Endothelial cell of umbilical vein (primary cell): ENCODE measurements at regions of chr17 and their contacts with region 1.

Region 1: DNA sequence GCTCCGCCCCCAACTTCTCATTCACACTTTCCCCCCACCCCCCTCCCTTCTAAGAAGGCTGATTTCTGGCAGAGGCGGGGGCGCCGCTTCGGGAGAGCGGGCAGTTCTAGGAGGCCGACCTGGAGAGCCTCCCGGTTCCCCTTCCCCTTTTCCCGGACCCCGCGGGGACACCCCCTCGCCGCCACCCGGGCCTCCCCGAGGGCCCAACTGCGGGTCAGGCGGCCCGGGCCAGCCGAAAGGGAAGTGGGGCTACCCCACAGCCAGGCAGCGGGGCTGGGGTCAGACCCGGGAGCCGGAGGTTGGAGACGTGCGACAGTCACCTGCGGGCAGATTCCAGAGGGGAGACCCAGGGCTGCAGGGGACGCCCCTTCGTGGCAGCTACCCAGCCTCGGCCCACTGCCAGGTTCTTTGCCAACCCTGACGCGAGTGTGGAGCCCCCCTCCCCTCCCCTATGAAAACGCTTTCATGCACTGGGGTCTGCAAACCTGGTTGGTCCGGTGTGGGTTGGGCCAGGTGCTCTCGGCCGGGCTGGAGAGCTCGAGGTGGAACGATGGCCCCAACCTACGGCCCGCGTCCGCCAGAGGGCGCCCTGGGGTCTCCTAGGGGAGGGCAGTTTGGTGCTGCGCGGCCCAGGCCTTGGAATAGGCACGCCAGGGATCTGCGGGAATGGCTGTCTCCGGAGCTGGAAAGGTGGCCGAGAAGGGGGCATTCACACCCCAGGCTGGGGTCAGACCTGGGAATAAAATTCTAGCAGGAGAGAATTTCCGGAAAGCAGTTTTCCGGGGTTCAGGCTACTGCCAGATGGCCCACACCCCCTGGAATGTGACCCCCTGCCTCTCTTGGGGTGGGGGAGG is 721 bp upstream of the SOCS3 start:
- DNase-seq: peak; percentile 84
- H3K4me3 ChIP-seq: peak overlapping the region; percentile 28 to 46 (median 39)
- H3K27ac ChIP-seq: peak overlapping the region; percentile 54
- H3K4me1 ChIP-seq: peaks cover 36% of the 10 kb centered on the region
- H3K27me3 ChIP-seq: no peaks in the 10 kb centered on the region
- CTCF ChIP-seq: peak; percentile 90 to 98
- POLR2A ChIP-seq: no peak

Region 2: GRCh38 chr17:77990301-77990700 is 370.3 kb before region 1 on chr17:
- CTCF ChIA-PET with region 1: no interaction called
- POLR2A ChIA-PET with region 1: no interaction called
- dilution Hi-C with region 1: no loop called
- intact Hi-C with region 1: no loop called
- DNase-seq: no peak
- H3K4me3 ChIP-seq: no peak overlapping the region
- H3K27ac ChIP-seq: no peak overlapping the region
- H3K4me1 ChIP-seq: no peaks in the 10 kb centered on the region
- H3K27me3 ChIP-seq: no peaks in the 10 kb centered on the region
- CTCF ChIP-seq: no peak
- POLR2A ChIP-seq: no peak

Region 3: DNA sequence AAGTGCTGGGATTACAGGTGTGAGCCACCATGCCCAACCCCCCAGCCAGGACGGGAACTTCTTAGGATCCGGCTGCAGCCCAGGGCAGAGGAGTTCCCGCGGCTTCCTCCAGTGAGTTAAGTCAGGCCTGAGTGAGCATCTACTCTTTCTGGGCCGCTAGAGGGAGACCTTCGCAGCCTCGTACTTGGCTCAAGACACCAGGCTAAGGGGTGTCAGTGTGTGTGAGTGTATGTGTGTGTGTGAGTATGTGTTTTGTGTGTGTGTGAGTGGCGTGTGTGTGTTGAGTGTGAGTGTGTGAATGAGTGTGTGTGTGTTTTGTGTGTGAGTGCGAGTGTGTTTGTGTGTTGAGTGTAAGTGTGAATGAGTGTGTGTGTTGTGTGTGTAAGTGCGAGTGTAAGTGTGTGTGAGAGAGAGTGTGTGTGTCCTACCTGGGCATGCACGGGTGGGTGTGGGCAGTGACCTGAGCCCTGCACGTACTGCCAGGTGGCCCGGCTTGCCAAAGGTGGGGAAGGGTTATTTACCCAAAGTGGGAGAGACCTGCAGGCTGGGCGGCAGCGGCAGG is 70.7 kb before region 1 on chr17:
- CTCF ChIA-PET with region 1: interaction called, 25 read pairs
- POLR2A ChIA-PET with region 1: no interaction called
- dilution Hi-C with region 1: no loop called
- intact Hi-C with region 1: loop called (anchors 1 kb)
- DNase-seq: peak; percentile 85
- H3K4me3 ChIP-seq: no peak overlapping the region
- H3K27ac ChIP-seq: no peak overlapping the region
- H3K4me1 ChIP-seq: no peaks in the 10 kb centered on the region
- H3K27me3 ChIP-seq: no peaks in the 10 kb centered on the region
- CTCF ChIP-seq: peak; percentile 74 to 91
- POLR2A ChIP-seq: no peak

Region 4: GRCh38 chr17:78324391-78325075 is 36.1 kb before region 1 on chr17:
- CTCF ChIA-PET with region 1: interaction called, 9 read pairs
- POLR2A ChIA-PET with region 1: interaction called, 11 read pairs
- dilution Hi-C with region 1: no loop called
- intact Hi-C with region 1: loop called (anchors 1 kb)
- DNase-seq: peak; percentile 97
- H3K4me3 ChIP-seq: no peak overlapping the region
- H3K27ac ChIP-seq: peak overlapping the region; percentile 90
- H3K4me1 ChIP-seq: peaks cover 32% of the 10 kb centered on the region
- H3K27me3 ChIP-seq: no peaks in the 10 kb centered on the region
- CTCF ChIP-seq: no peak
- POLR2A ChIP-seq: no peak

Region 5: GRCh38 chr17:78378225-78379130 is 17.9 kb after region 1 on chr17 and contains the start of gene PGS1:
- CTCF ChIA-PET with region 1: interaction called, 36 read pairs
- POLR2A ChIA-PET with region 1: interaction called, 6 read pairs
- dilution Hi-C with region 1: no loop called
- intact Hi-C with region 1: loop called (anchors 1 kb)
- DNase-seq: peak; percentile 71
- H3K4me3 ChIP-seq: peak within 1 kb of the TSS; percentile 62 to 75 (median 67)
- H3K27ac ChIP-seq: peak within 1 kb of the TSS; percentile 91
- H3K4me1 ChIP-seq: peaks cover 68% of the 10 kb centered on the region
- H3K27me3 ChIP-seq: no peaks in the 10 kb centered on the region
- CTCF ChIP-seq: no peak
- POLR2A ChIP-seq: peak; percentile 50
- total RNA-seq, gene PGS1: 55.6 and 66.0 TPM in 2 replicates

Region 6: DNA sequence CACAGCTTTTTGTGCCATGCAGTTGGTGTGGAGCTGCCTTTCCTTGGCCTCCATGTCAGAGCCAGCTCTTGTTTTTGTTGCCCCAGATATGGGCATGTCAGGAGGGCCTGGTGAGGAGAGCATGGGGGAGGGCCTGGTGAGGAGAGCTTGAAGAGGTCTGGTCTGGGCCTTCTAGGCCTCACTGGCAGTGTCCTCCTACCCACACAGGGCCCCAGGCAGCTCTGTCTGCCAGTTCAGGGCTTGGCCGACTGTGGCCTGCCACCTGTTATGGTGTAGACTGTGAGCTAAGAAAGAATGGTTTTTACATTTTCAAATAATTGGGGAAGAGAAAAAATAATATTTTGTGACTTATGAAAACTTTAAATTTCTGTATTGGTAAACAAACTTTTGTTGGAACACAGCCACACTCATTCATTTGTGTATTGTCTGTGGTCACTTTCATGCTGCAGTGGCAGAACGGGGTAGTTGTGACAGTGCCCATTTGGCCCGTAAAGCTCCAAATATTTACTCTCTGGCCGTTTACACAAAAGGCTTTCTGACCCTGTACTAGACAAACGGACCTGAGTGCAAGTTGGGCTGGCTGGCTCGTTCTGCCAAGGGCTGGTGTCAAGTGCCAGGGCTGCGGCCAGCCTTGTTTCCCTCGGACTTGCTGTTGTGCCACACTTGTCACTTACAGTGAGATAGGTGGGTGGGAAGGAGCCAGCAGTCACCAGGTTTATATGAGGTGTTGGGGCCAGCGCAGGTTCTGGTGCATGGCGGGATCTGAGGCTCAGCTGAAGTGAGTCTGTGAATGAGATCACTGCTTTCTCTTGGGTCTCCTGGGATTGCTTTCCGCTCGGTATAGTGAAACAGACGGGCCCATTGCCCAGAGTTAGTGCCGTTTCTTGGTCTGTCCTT is 36.1 kb after region 1 on chr17:
- CTCF ChIA-PET with region 1: interaction called, 21 read pairs
- POLR2A ChIA-PET with region 1: interaction called, 3 read pairs
- dilution Hi-C with region 1: no loop called
- intact Hi-C with region 1: no loop called
- DNase-seq: no peak
- H3K4me3 ChIP-seq: no peak overlapping the region
- H3K27ac ChIP-seq: no peak overlapping the region
- H3K4me1 ChIP-seq: peaks cover 21% of the 10 kb centered on the region
- H3K27me3 ChIP-seq: no peaks in the 10 kb centered on the region
- CTCF ChIP-seq: no peak
- POLR2A ChIP-seq: no peak

Region 7: GRCh38 chr17:78708510-78708973 is 347.9 kb after region 1 on chr17:
- CTCF ChIA-PET with region 1: interaction called, 4 read pairs
- POLR2A ChIA-PET with region 1: no interaction called
- dilution Hi-C with region 1: no loop called
- intact Hi-C with region 1: loop called (anchors 5 kb)
- DNase-seq: peak; percentile 72
- H3K4me3 ChIP-seq: no peak overlapping the region
- H3K27ac ChIP-seq: no peak overlapping the region
- H3K4me1 ChIP-seq: peaks cover 16% of the 10 kb centered on the region
- H3K27me3 ChIP-seq: no peaks in the 10 kb centered on the region
- CTCF ChIP-seq: peak; percentile 87 to 90
- POLR2A ChIP-seq: no peak